Calu3 (cell line): ENCODE measurements at regions of chr2 and their contacts with region 1.

Region 1: GRCh38 chr2:218717262-218717661 is 6.6 kb downstream of the TTLL4 start:
- DNase-seq: peak; percentile 23
- H3K4me3 Mint-ChIP-seq: peak overlapping the region; percentile 14
- H3K27ac Mint-ChIP-seq: peak overlapping the region; percentile 50
- H3K4me1 Mint-ChIP-seq: peaks cover 46% of the 10 kb centered on the region
- H3K27me3 Mint-ChIP-seq: no peaks in the 10 kb centered on the region
- CTCF ChIP-seq: no peak

Region 2: DNA sequence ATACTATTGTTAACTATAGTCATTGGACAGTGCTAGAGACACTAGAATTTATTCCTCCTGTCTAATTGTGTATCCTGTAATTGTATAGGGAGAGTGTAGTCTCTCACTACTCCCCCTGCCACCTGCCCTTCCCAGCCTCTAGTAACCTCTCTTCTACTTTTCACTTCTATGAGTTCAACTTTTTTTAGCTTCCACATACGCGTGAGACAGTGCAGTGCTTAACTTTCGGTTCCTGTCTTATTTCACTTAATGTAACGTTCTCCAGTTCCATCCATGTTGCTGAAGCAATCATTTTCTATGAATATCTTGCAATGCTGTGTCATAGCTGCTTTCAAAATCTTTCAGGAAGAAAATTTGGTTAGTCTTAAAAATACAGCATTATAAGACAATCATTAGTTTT is 671.0 kb before region 1 on chr2:
- CTCF ChIA-PET with region 1: no interaction called
- intact Hi-C with region 1: no loop called
- DNase-seq: no peak
- H3K4me3 Mint-ChIP-seq: no peak overlapping the region
- H3K27ac Mint-ChIP-seq: no peak overlapping the region
- H3K4me1 Mint-ChIP-seq: no peaks in the 10 kb centered on the region
- H3K27me3 Mint-ChIP-seq: peaks cover 72% of the 10 kb centered on the region
- CTCF ChIP-seq: no peak

Region 3: GRCh38 chr2:218476676-218477075 is 240.6 kb before region 1 on chr2:
- CTCF ChIA-PET with region 1: no interaction called
- intact Hi-C with region 1: no loop called
- DNase-seq: no peak
- H3K4me3 Mint-ChIP-seq: no peak overlapping the region
- H3K27ac Mint-ChIP-seq: no peak overlapping the region
- H3K4me1 Mint-ChIP-seq: no peaks in the 10 kb centered on the region
- H3K27me3 Mint-ChIP-seq: no peaks in the 10 kb centered on the region
- CTCF ChIP-seq: no peak

Region 4: GRCh38 chr2:218745559-218746469 is 28.6 kb after region 1 on chr2:
- CTCF ChIA-PET with region 1: no interaction called
- intact Hi-C with region 1: loop called (anchors 2 kb)
- DNase-seq: peak; percentile 65
- H3K4me3 Mint-ChIP-seq: peak overlapping the region; percentile 6
- H3K27ac Mint-ChIP-seq: peak overlapping the region; percentile 79
- H3K4me1 Mint-ChIP-seq: peaks cover 18% of the 10 kb centered on the region
- H3K27me3 Mint-ChIP-seq: no peaks in the 10 kb centered on the region
- CTCF ChIP-seq: no peak

Region 5: DNA sequence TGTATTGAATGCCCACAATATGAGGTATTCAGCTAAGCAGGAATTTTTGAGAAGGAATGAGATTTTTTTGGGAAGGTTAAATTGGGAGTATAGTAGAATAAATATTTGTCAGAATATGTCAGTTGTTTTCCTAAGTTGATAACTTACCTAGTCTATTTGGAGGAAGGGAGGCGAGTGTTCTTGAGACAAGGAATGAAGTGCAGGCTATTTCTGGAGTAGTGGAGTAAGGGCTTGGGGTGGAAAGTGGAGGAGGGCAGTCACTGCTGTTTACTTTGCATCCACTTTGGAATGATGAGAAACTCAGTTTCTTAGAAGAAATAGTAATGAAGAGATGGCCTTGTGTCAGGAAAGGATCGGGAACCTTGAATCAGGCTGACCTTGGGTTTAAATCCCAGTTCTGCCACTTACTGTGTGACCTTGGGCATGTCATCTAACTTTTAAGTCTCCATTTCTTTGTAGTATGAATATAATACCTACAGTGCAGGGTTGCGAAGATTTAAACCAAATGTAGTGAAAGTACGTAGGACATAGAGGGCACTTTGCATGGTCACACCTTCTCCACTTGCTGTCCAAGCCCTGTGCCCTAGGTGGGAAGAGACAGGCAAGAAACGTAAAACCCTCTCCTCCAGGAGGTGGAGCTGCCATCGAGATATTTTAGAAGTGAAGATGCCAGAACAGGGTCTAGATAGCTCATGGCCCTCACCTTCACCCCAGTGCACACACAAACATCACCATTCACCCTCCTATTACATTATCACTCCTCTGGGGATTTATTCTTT is 39.5 kb after region 1 on chr2:
- CTCF ChIA-PET with region 1: no interaction called
- intact Hi-C with region 1: no loop called
- DNase-seq: no peak
- H3K4me3 Mint-ChIP-seq: no peak overlapping the region
- H3K27ac Mint-ChIP-seq: no peak overlapping the region
- H3K4me1 Mint-ChIP-seq: no peaks in the 10 kb centered on the region
- H3K27me3 Mint-ChIP-seq: no peaks in the 10 kb centered on the region
- CTCF ChIP-seq: no peak